Activated CD8-positive, alpha-beta T cell treated with anti-CD3 and anti-CD28 coated beads for 36 hours (primary cell): ENCODE measurements at regions of chr1 and their contacts with region 1.

Region 1: GRCh38 chr1:83931658-83932253 is 67.2 kb downstream of the TTLL7 start:
- DNase-seq: peak; percentile 25
- ATAC-seq: peak; percentile 73
- H3K4me3 Mint-ChIP-seq: no peak overlapping the region
- H3K27ac Mint-ChIP-seq: no peak overlapping the region
- H3K4me1 Mint-ChIP-seq: no peaks in the 10 kb centered on the region
- H3K27me3 Mint-ChIP-seq: peaks cover 5% of the 10 kb centered on the region
- CTCF ChIP-seq: peak; percentile 75

Region 2: GRCh38 chr1:83942914-83943313 is 11.2 kb after region 1 on chr1:
- CTCF ChIA-PET with region 1: interaction called, 10 read pairs
- POLR2A ChIA-PET with region 1: no interaction called
- intact Hi-C with region 1: no loop called
- DNase-seq: no peak
- ATAC-seq: no peak
- H3K4me3 Mint-ChIP-seq: no peak overlapping the region
- H3K27ac Mint-ChIP-seq: no peak overlapping the region
- H3K4me1 Mint-ChIP-seq: no peaks in the 10 kb centered on the region
- H3K27me3 Mint-ChIP-seq: peaks cover 2% of the 10 kb centered on the region
- CTCF ChIP-seq: no peak

Region 3: DNA sequence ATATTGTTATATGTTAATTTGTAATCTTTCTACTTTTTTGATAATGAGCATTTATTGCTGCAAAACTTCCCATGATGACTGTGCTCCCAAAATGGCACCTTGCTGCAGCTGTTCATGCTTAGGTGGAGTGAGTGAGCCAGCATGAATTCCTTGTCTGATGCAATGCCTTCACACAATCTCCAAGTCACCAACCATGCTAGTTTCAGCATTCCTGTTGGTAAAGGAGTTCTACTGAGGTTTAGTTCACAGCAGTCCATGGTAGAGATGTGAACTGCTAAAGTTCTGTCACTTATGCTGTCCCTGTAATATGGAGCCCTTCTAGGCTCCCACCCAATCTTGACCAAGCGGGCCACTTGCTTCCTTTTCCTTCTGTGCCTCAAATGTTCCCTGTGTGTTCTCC is 186.1 kb after region 1 on chr1:
- CTCF ChIA-PET with region 1: interaction called, 35 read pairs
- POLR2A ChIA-PET with region 1: no interaction called
- intact Hi-C with region 1: loop called (anchors 2 kb)
- DNase-seq: no peak
- ATAC-seq: no peak
- H3K4me3 Mint-ChIP-seq: no peak overlapping the region
- H3K27ac Mint-ChIP-seq: no peak overlapping the region
- H3K4me1 Mint-ChIP-seq: peaks cover 20% of the 10 kb centered on the region
- H3K27me3 Mint-ChIP-seq: no peaks in the 10 kb centered on the region
- CTCF ChIP-seq: no peak

Region 4: DNA sequence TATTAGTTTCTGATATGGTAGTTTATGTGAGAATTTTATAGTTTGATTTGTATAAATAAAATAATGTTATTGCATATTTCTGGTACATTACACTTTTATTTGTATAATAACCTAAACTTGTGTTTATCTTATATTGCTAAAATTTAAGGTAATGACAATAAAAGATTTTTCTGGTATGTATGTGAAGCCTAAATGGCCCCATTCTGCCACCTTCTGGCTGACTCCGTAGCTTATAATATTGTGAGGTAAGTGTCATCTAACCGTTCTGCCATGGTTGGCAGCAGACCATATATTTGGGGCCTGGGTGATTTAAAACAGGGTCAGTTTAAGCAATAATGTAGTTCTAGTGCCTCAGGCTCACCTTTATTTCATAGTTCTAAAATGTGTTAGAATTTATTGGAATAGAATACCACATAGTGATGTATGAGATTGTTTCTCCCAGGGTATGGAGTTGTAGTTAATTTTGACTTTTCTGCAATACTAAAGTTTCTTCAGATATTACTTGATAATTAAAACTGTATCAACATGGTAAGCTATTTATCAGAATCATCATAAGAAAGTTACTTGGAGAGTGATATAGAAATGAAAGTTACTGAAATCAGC is 191.1 kb after region 1 on chr1:
- CTCF ChIA-PET with region 1: interaction called, 35 read pairs
- POLR2A ChIA-PET with region 1: no interaction called
- intact Hi-C with region 1: loop called (anchors 2 kb)
- DNase-seq: peak; percentile 82
- ATAC-seq: peak; percentile 53
- H3K4me3 Mint-ChIP-seq: no peak overlapping the region
- H3K27ac Mint-ChIP-seq: no peak overlapping the region
- H3K4me1 Mint-ChIP-seq: peaks cover 5% of the 10 kb centered on the region
- H3K27me3 Mint-ChIP-seq: no peaks in the 10 kb centered on the region
- CTCF ChIP-seq: peak; percentile 77